Psoas muscle (tissue), 8 donors: ENCODE measurements at regions of chr1 and their contacts with region 1.

Region 1: GRCh38 chr1:33295450-33296081 is 25.3 kb downstream of the A3GALT2 start:
- DNase-seq: peak; percentile 83 to 90
- ATAC-seq: peak; percentile 84 to 93 (median 90)
- H3K4me3 ChIP-seq: no peak overlapping the region
- H3K27ac ChIP-seq: no peak overlapping the region
- H3K4me1 ChIP-seq: no peaks in the 10 kb centered on the region
- H3K27me3 ChIP-seq: no peaks in the 10 kb centered on the region
- CTCF ChIP-seq: peak; percentile 97

Region 2: GRCh38 chr1:33137800-33138199 is 157.8 kb before region 1 on chr1:
- intact Hi-C with region 1: loop called in 1 of 2 experiments (anchors 10 kb)
- DNase-seq: peak in 1 of 2 donors; percentile 74
- ATAC-seq: peak in 3 of 4 donors; percentile 28 to 64 (median 50)
- H3K4me3 ChIP-seq: no peak overlapping the region
- H3K27ac ChIP-seq: no peak overlapping the region
- H3K4me1 ChIP-seq: peaks cover 18% of the 10 kb centered on the region
- H3K27me3 ChIP-seq: no peaks in the 10 kb centered on the region
- CTCF ChIP-seq: peak; percentile 31

Region 3: GRCh38 chr1:33367485-33368405 is 72.2 kb after region 1 on chr1:
- intact Hi-C with region 1: loop called (anchors 1 to 2 kb)
- DNase-seq: peak; percentile 86 to 95
- ATAC-seq: peak; percentile 72 to 80 (median 76)
- H3K4me3 ChIP-seq: no peak overlapping the region
- H3K27ac ChIP-seq: peak overlapping the region; percentile 88
- H3K4me1 ChIP-seq: peaks cover 44% of the 10 kb centered on the region
- H3K27me3 ChIP-seq: no peaks in the 10 kb centered on the region
- CTCF ChIP-seq: peak; percentile 98

Region 4: DNA sequence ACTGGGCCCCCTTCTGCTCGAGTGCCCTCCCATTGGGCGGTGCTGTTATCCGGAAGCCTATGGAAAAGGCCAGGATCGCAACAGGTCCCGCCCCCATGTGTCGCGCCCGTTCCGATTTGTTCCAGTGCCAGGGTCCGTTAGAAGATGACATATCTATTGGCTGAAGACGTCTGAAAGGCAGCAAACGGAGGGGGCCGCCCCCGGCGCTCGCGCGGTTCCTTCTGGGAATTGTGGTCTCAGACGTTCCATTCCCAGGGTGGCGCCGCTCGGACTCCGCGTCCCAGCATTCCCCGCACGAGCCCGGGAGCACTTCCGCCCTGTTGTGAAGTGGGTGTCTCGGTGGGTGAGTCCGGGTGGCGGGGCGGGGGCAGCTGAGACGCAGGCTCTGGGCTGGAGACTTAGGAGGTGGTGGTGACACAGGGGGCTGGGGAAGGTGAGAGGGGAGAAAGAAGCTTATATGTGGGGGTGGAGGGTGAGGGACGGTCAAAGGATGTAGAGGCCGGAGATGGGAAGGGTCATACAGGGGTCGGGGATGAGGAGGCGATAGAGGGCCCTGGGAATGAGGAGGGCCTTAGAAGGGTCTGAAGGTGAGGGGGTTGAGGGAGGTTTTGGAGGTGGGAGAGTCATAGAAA is 176.9 kb after region 1 on chr1 and contains the start of gene ZSCAN20:
- intact Hi-C with region 1: loop called (anchors 1 to 2 kb)
- DNase-seq: peak; percentile 98 to 99
- ATAC-seq: peak; percentile 94 to 95 (median 95)
- H3K4me3 ChIP-seq: peak within 1 kb of the TSS; percentile 67
- H3K27ac ChIP-seq: peak within 1 kb of the TSS; percentile 73
- H3K4me1 ChIP-seq: peaks cover 20% of the 10 kb centered on the region
- H3K27me3 ChIP-seq: no peaks in the 10 kb centered on the region
- CTCF ChIP-seq: no peak
- total RNA-seq, gene ZSCAN20: 2.0 to 4.9 (median 3.3) TPM